ENCODE measurements at regions of chr19 and their contacts with region 1.

Region 1: DNA sequence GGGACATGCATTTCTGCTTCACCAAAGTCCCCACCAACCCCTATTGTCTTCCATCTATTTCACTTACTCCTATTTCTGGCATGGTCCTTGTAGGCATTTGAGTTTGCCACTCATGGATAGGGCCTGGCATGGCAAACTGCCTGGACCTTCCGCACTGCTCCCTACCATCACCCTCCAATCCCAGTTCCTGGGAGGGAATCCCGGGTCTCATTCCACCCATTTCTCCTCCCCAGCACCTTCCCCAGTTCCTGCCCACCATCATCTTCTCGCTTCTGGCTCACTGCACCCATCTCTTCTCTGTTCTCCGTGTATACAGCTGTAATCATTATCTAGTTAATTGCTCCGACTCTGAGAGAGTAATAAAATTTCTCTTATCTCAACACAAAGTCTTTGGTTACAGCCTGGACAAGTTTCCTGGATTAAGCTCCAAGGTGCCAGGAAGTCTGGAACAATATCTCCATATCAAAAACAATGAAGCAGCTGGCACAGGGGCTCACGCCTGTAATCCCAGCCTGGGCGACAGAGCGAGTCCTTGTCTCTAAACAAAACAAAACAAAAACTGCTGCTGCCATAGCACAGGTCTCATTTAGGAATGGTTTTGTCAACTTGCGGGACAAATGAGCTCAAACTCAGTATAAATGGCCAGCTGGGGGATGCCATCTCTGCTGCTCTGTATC is 17.0 kb upstream of the COX7A1 start:
- DNase-seq: peak in 1 of 10 donors; percentile 22

Region 2: GRCh38 chr19:35959040-35959967 is 209.9 kb before region 1 on chr19:
- intact Hi-C with region 1: loop called (anchors 10 kb)
- DNase-seq: peak in 9 of 10 donors; percentile 30 to 95 (median 55)

Region 3: GRCh38 chr19:36132489-36132891 is 36.7 kb before region 1 on chr19:
- intact Hi-C with region 1: loop called (anchors 1 kb)
- DNase-seq: no peak